Head of caudate nucleus (tissue), 42 donors: ENCODE measurements at regions of chr1 and their contacts with region 1.

Region 1: DNA sequence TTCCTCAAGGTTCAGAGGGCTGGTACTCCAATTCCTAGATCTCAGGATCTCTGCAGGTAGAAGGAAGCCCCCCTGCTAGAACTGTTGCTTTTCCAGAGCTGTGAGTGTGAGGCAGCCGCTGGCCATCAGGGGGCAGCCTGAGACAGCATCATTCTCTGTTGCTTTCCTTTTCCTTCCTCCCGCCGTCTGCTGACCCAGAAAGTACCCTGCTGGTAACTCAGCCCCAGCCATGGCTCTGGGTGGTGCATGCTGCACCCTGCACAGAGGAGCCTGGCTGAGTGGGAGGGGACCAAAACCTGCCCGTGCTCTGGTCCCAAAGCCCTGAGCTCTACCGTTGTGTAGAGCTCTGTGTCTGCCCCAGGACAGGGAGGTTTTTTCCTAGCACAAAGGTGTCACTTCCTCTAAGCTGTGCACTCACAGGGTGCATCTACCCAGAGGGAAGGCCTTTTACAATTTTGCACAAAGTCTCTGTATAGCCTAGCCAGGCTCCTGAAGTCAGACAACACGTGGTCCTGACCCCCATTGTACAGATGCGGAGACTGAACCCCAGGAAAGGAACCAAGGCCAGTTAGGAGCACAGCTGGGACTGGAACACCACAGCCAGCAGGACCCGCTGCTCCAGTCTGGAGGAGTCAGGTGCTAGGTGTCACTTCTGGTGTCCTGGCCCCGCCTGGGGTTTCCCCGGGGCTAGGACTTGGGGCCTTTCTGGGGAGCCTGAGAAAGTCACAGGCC is 5.6 kb upstream of the FAM131C start:
- DNase-seq: peak; percentile 58 to 90 (median 82)

Region 2: DNA sequence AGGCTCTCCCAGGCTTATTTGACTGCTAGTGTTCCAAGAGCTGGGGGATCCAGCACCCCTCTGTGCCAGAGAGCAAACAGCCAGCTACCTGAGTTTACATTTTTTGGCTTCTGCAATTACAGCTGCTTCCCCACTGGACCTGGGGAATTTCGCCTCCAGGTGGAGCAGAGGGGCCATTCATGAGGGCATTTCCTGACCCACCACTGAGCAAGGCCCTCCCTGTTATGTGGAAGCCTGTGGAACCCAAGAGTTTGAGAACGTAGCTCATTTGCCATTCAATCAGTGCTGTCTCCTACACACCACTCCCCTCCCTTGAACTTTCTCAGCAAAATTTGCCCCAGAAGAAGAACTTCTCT is 968.2 kb before region 1 on chr1:
- intact Hi-C with region 1: no loop called
- DNase-seq: no peak

Region 3: DNA sequence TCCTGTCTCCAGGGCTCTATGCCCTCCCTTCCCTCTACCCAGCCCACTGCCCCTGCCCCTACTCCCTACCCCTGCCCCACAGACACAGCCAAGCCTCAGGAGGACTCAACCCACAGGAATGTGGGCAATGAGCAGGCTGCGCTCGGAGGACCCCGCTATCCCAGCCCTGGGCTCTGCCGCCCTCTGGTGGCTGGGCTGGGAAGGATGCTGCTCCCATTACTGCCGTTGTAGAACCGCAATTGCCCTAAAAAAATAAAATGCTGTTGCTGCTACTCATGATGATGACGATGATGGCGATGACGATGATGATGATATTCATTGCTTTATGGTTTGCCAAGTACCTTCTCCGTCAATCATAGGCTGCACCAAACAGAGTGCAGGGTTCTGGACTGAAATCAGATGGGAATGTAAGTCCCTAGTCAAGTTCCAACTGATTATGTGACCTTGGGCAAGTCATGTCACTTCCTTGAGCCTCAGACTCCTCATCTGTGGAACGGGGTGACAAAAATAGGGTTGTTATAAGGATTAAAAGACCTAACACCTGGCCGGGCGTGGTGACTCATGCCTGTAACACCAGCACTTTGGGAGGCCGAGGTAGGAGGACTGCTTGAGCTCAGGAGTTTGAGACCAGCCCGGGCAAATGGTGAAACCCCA is 108.8 kb after region 1 on chr1:
- intact Hi-C with region 1: loop called (anchors 2 kb)
- DNase-seq: peak in 41 of 42 donors; percentile 63 to 89 (median 77)

Region 4: GRCh38 chr1:16236511-16237342 is 157.6 kb after region 1 on chr1 and contains the start of gene CPLANE2:
- intact Hi-C with region 1: loop called (anchors 5 kb)
- DNase-seq: peak; percentile 73 to 96 (median 93)

Region 5: DNA sequence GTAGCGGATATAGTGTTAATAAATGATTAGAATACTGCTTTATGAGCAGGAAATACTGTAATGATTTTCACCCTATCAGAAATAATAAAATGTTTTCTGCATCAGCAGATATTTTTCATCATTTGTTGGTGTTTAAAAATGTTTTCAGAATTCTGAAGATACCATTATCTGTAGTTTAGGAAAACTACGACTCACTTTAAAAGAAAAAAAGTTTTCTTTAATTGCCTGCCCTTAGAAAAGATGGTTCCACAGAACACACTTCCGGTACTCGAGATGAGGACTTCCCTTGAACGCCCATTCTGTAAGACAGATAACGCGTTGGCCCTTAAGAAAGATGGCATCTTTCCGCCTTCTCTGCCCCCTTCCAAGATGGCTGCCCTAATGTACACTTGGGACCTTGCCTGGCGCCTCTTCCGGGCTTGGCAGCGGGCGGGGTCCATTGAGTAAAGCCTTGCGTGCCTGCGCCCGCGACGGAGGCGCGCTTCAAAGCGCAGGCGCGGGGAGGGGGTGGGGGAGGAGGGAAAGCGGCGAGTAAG is 287.7 kb after region 1 on chr1 and contains the start of gene SZRD1:
- intact Hi-C with region 1: loop called (anchors 10 kb)
- DNase-seq: peak; percentile 92 to 99 (median 96)